ENCODE measurements at regions of chr3 and their contacts with region 1.

Region 1: GRCh38 chr3:51391075-51391567 is at the start of gene RBM15B:
- DNase-seq: peak; percentile 99
- ATAC-seq: peak; percentile 96
- H3K4me3 Mint-ChIP-seq: peak within 1 kb of the TSS; percentile 81
- H3K27ac Mint-ChIP-seq: peak within 1 kb of the TSS; percentile 89
- H3K4me1 Mint-ChIP-seq: peaks cover 70% of the 10 kb centered on the region
- H3K27me3 Mint-ChIP-seq: no peaks in the 10 kb centered on the region
- total RNA-seq, gene RBM15B: 20.9 to 21.5 TPM

Region 2: DNA sequence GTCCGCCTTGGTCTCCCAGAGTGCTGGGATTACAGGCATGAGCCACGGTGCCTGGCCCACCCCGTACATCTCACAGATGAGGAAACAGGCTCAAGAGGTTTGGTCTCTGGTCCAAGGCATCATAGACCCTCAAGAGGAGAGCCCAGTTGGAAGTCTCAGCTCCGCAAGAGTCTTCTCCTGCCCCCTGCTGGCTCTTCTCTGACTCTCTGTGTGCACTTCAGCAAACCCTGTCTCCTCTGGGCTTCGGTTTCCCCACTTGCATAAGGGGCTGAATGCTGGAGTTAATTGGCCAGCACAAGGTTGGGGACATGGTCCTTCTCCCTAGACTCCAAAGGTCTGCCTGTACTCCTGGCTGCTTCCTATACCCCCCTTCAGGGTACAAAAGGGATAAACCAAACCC is 1491.3 kb before region 1 on chr3:
- CTCF ChIA-PET with region 1: no interaction called
- POLR2A ChIA-PET with region 1: no interaction called
- intact Hi-C with region 1: no loop called
- DNase-seq: peak; percentile 44
- ATAC-seq: no peak
- H3K4me3 Mint-ChIP-seq: no peak overlapping the region
- H3K27ac Mint-ChIP-seq: no peak overlapping the region
- H3K4me1 Mint-ChIP-seq: peaks cover 5% of the 10 kb centered on the region
- H3K27me3 Mint-ChIP-seq: no peaks in the 10 kb centered on the region

Region 3: GRCh38 chr3:51538459-51539290 is 147.6 kb after region 1 on chr3 and contains the start of gene RAD54L2:
- CTCF ChIA-PET with region 1: no interaction called
- POLR2A ChIA-PET with region 1: no interaction called
- intact Hi-C with region 1: loop called in 1 of 2 experiments (anchors 1 kb)
- DNase-seq: peak; percentile 87
- ATAC-seq: peak; percentile 85
- H3K4me3 Mint-ChIP-seq: peak within 1 kb of the TSS; percentile 78
- H3K27ac Mint-ChIP-seq: peak within 1 kb of the TSS; percentile 94
- H3K4me1 Mint-ChIP-seq: peaks cover 32% of the 10 kb centered on the region
- H3K27me3 Mint-ChIP-seq: no peaks in the 10 kb centered on the region
- total RNA-seq, gene RAD54L2: 24.9 to 27.4 TPM

Region 4: DNA sequence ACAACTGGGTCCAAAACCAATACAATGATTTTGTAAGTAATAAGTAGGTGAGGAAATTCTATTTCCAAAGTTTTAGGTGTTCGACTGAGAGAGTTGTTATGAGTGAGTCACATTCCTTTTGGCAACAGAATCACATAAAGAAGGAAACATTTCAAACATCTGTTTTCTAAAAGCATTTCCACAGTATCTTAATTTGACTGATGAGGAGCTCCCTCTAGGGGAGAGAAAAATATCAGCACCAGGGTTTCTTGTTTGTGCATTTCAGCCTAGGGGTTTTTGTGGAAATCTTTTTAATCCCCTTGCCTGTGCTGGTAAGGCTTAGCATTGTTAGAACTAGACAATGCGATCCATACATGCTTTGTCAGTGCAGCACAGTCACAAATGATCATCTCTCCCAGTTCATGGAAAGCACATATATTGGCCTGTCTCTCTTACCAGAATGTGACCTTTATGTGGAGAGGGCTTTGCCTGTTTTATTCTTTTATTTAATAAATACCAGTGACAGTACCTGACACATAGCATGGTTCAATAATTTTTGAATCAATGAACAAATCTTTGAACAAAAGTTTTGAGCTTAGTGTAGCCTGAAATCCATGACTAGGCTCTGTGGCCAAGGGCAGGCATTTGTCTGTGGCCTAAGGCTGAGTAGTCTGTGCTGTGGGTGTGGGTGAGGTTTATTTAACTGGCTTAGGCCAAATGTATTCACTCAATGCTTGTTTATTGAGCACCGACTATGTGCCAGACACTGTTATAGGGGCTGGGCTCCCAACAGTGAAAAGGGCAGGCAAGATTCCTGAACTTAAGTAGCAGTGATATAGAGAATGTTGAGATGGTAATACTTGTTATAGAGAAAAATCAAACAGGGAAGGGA is 409.0 kb after region 1 on chr3:
- CTCF ChIA-PET with region 1: no interaction called
- POLR2A ChIA-PET with region 1: no interaction called
- intact Hi-C with region 1: loop called (anchors 2 to 10 kb)
- DNase-seq: no peak
- ATAC-seq: peak; percentile 53
- H3K4me3 Mint-ChIP-seq: no peak overlapping the region
- H3K27ac Mint-ChIP-seq: no peak overlapping the region
- H3K4me1 Mint-ChIP-seq: peaks cover 18% of the 10 kb centered on the region
- H3K27me3 Mint-ChIP-seq: peaks cover 12% of the 10 kb centered on the region

Region 5: GRCh38 chr3:51830836-51831385 is 439.8 kb after region 1 on chr3:
- CTCF ChIA-PET with region 1: no interaction called
- POLR2A ChIA-PET with region 1: no interaction called
- intact Hi-C with region 1: no loop called
- DNase-seq: no peak
- ATAC-seq: no peak
- H3K4me3 Mint-ChIP-seq: no peak overlapping the region
- H3K27ac Mint-ChIP-seq: no peak overlapping the region
- H3K4me1 Mint-ChIP-seq: no peaks in the 10 kb centered on the region
- H3K27me3 Mint-ChIP-seq: peaks cover 25% of the 10 kb centered on the region

Region 6: GRCh38 chr3:52291508-52292181 is 900.5 kb after region 1 on chr3:
- CTCF ChIA-PET with region 1: no interaction called
- POLR2A ChIA-PET with region 1: no interaction called
- intact Hi-C with region 1: loop called in 1 of 2 experiments (anchors 5 kb)
- DNase-seq: peak; percentile 66
- ATAC-seq: no peak
- H3K4me3 Mint-ChIP-seq: no peak overlapping the region
- H3K27ac Mint-ChIP-seq: no peak overlapping the region
- H3K4me1 Mint-ChIP-seq: peaks cover 16% of the 10 kb centered on the region
- H3K27me3 Mint-ChIP-seq: no peaks in the 10 kb centered on the region